ENCODE measurements at regions of chr17 and their contacts with region 1.

Region 1: DNA sequence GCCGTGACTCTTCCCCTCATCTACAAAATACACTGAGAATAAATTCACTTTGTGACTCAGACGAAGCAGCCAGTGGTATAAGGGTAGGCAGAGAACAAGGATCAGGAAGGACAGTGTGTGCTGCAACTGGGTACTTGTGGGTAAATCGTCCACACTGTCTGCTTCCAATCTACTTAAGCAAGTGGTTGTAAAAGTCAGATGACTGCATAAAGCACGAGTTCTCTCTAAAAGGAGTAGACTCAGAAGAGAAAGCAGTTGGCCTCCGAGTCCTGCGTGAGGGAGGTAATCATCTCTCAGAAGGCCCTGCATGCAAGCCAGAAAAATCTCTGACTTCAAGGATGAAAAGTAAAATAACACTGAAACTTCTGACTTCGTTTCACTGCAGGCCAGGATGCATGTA is 43.1 kb downstream of the ANKFY1 start:
- DNase-seq: no peak
- ATAC-seq: no peak
- H3K4me3 ChIP-seq: no peak overlapping the region
- H3K27ac ChIP-seq: no peak overlapping the region
- H3K4me1 ChIP-seq: no peaks in the 10 kb centered on the region
- CTCF ChIP-seq: no peak
- EP300 ChIP-seq: no peak
- POLR2A ChIP-seq: no peak
- RAD21 ChIP-seq: no peak

Region 2: GRCh38 chr17:4199818-4200402 is 20.7 kb before region 1 on chr17:
- CTCF ChIA-PET with region 1: interaction called, 134 read pairs
- POLR2A ChIA-PET with region 1: no interaction called
- DNase-seq: peak; percentile 59 to 81
- ATAC-seq: peak; percentile 76 to 84; a peak in 5 of 6 replicates
- H3K4me3 ChIP-seq: no peak overlapping the region
- H3K27ac ChIP-seq: no peak overlapping the region
- H3K4me1 ChIP-seq: no peaks in the 10 kb centered on the region
- CTCF ChIP-seq: peak; percentile 81
- EP300 ChIP-seq: no peak
- POLR2A ChIP-seq: no peak
- RAD21 ChIP-seq: peak; percentile 62

Region 3: DNA sequence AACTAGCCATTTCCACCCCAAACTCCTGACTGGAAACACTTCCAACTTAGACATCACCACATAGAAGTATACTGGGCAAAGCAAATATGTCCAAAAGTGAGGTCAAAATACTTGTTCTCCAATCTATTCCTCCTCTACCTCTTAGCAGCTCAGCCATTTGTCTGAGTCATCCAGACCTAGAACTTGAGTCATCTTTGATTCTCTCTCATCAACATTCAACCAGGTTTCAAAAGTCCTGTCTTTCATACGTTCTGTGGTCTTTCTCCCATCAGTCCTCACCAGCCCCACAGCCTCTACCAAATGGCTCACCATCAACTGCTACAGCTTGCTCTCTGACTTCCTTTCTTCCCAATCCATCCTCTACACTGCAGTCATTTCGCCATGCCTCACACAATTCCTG is 36.3 kb after region 1 on chr17:
- CTCF ChIA-PET with region 1: interaction called, 56 read pairs
- POLR2A ChIA-PET with region 1: no interaction called
- DNase-seq: no peak
- ATAC-seq: no peak
- H3K4me3 ChIP-seq: no peak overlapping the region
- H3K27ac ChIP-seq: no peak overlapping the region
- H3K4me1 ChIP-seq: no peaks in the 10 kb centered on the region; the same call in 2 of the 3 replicates
- CTCF ChIP-seq: no peak
- EP300 ChIP-seq: no peak
- POLR2A ChIP-seq: no peak
- RAD21 ChIP-seq: no peak

Region 4: DNA sequence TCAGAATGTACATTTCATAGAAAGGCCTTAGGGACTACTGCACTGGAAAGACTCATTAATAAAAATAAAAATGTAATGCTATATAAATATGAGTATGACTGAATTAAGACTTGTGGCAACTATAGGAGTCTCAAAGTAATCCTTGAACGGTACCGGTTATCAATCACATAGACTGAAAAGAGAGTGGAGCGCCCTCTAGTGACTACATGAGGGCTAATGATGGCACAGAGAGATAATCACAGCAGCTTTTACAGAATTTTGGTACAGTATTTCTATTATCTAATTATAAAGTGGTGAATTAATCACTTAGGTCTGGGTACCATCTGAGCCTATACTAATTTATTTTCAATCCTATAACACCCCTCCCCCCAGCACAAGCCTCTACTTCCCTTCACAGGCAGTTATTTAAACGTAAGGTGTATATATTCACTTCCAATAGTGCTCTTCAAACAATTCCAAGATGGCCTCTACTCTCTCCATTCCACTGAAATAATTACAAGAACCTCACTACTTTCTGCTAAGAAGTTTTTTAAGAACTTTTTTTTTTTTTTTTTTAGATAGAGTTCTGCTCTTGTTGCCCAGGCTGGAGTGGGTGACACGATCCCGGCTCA is 83.9 kb after region 1 on chr17:
- CTCF ChIA-PET with region 1: interaction called, 21 read pairs
- POLR2A ChIA-PET with region 1: no interaction called
- DNase-seq: peak; percentile 52 to 74
- ATAC-seq: peak; percentile 90 to 92; a peak in 5 of 6 replicates
- H3K4me3 ChIP-seq: no peak overlapping the region
- H3K27ac ChIP-seq: no peak overlapping the region
- H3K4me1 ChIP-seq: peaks cover 8% of the 10 kb centered on the region; the same call in 2 of the 3 replicates
- CTCF ChIP-seq: peak; percentile 92
- EP300 ChIP-seq: no peak
- POLR2A ChIP-seq: no peak
- RAD21 ChIP-seq: peak; percentile 35 to 41; a peak in 3 of 5 replicates

Region 5: GRCh38 chr17:4381690-4382671 is 161.3 kb after region 1 on chr17:
- CTCF ChIA-PET with region 1: interaction called, 11 read pairs
- POLR2A ChIA-PET with region 1: no interaction called
- DNase-seq: no peak
- ATAC-seq: peak; percentile 49 to 60
- H3K4me3 ChIP-seq: no peak overlapping the region
- H3K27ac ChIP-seq: no peak overlapping the region
- H3K4me1 ChIP-seq: no peaks in the 10 kb centered on the region
- CTCF ChIP-seq: no peak
- EP300 ChIP-seq: no peak
- POLR2A ChIP-seq: no peak
- RAD21 ChIP-seq: no peak

Region 6: DNA sequence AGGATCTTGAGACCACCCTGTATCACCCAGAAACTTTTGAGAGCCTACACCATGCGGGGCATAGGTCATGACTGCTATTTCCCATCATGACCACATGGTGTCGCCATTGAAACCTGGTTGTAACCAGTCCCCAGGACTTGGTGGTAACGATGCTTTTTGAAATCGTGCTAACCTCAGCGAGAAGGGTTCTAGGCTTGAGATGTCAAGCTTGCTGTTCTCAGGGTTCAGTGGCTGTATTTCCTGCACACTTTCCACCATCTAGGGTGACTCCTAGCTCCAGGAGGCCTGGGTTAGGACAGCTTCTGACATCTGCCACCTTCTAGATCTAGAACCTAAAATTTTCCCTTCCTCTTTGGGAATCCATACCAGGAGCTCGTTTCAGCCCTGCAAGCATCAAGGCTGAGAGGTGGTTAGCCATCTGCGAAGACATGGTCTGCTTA is 200.1 kb after region 1 on chr17:
- CTCF ChIA-PET with region 1: interaction called, 39 read pairs
- POLR2A ChIA-PET with region 1: no interaction called
- DNase-seq: peak; percentile 85 to 90
- ATAC-seq: peak; percentile 93 to 95
- H3K4me3 ChIP-seq: no peak overlapping the region
- H3K27ac ChIP-seq: no peak overlapping the region
- H3K4me1 ChIP-seq: no peaks in the 10 kb centered on the region
- CTCF ChIP-seq: peak; percentile 90
- EP300 ChIP-seq: no peak
- POLR2A ChIP-seq: no peak
- RAD21 ChIP-seq: peak; percentile 85 to 93

Measured in A549 (cell line).